Heart right ventricle (tissue), 16 donors: ENCODE measurements at regions of chr19 and their contacts with region 1.

Region 1: DNA sequence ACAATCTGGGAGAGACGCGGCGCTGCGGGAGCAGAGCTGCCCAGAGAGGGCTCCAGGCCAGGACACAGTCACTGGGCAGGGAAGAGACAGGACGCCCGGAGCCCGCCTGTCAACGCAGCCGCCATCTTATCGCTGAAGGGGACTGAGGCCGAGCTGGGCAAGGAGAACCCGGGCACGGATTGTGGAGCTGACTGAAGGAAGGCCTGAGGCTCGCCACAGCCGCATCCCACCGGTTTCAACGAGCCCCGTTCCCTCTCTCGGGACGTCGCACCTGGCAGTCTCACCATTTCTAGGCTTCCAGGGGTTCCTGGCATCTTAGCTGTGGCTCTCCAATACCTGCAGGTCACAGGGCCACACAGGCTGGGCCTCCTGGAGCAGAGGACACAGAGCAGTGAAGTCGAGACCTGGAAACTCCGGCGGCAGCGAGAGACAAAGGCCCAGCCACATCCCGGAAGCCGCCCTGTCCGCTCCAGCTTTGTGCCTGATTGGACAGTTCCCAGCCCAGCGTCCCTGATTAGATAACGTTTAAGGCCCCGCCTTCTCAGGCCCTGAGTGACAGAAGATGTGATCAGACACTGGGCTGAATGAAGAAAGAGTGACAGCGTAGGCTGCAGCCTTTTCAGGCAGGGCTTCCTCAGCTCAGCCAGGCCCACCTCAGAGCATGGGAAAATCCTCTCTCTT is at the start of gene ZNF91:
- DNase-seq: peak; percentile 91 to 98
- ATAC-seq: peak; percentile 96 to 99 (median 98)
- H3K4me3 ChIP-seq: peak within 1 kb of the TSS; percentile 67 to 94 (median 78)
- H3K27ac ChIP-seq: peak within 1 kb of the TSS; percentile 90 to 98 (median 95)
- H3K4me1 ChIP-seq: peaks cover 7 to 44% (median 37%) of the 10 kb centered on the region in 9 donors
- H3K27me3 ChIP-seq: no peaks in the 10 kb centered on the region
- CTCF ChIP-seq: no peak
- total RNA-seq, gene ZNF91: 101 to 326 (median 158) TPM

Region 2: DNA sequence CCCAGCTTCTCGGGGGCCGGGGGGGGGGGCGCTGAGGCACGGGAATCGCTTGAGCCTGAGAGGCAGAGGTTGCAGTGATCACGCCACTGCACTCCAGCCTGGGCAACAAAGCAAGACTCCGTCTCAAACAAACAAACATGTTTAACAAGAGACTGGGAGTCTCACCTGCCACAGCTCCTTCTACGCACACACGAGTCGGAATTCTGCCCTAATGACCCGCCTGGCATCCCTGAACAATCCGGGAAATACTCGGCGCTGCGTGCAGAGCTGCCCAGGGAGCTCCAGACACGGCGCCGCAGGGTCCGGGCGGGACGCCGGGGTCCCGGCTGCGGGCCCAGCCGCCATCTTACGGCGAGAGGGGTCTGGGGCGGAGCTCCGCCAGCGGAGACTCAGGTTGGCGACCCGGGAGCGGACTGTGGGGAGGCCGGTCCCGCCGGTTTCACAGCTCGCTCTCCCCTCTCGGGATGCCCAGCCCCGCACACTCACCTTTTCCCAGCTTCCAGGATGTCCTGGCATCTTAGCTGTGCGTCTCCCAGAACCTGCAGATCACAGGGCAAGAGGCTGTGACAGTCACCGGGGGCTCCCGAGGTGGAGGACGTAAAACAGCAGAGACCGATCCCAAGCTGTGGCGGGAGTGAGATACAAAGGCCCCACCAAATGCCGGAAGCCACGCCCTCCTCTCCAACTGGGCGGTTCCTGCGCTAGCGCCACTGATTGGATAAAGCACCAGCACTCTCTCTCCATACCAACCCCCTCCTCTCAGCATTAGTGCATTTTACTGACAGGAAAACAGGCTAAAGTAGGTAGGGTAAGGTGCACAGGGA is 121.4 kb before region 1 on chr19:
- intact Hi-C with region 1: loop called in 1 of 10 experiments (anchors 10 kb)
- DNase-seq: peak; percentile 91 to 92
- ATAC-seq: peak; percentile 99 to 100 (median 100)
- H3K4me3 ChIP-seq: peak overlapping the region; percentile 69 to 100 (median 95)
- H3K27ac ChIP-seq: peak overlapping the region in 9 of 10 donors; percentile 69 to 89 (median 84)
- H3K4me1 ChIP-seq: peaks cover 0 to 18% (median 11%) of the 10 kb centered on the region in 9 donors
- H3K27me3 ChIP-seq: no peaks in the 10 kb centered on the region
- CTCF ChIP-seq: peak in 3 of 9 donors; percentile 6 to 34 (median 19)

Region 3: DNA sequence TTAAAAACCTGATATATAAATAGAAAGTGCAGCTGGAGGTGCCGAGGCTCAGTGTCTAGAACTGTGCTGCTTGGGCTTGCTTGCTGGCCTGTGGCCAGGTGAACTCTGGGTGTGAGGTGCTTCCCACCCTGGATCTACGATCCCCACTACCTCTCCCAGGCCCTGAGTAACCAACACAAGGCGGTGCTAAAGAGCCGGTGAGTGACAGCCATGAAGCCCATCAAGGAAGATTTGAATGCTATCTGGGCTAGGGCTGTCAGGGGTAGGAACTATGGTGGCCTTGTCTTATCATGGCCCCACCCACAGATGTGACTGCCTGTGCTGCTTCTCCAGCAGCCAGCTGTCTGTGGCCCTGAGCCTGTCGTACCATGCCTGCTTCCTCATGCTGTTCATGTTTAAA is 25.6 kb after region 1 on chr19:
- intact Hi-C with region 1: no loop called
- DNase-seq: no peak
- ATAC-seq: no peak
- H3K4me3 ChIP-seq: no peak overlapping the region
- H3K27ac ChIP-seq: no peak overlapping the region
- H3K4me1 ChIP-seq: peaks cover 0 to 6% (median under 1%) of the 10 kb centered on the region in 9 donors
- H3K27me3 ChIP-seq: peaks cover 0 to 12% (median 0%) of the 10 kb centered on the region in 7 donors
- CTCF ChIP-seq: no peak

Region 4: GRCh38 chr19:23505766-23506165 is 110.6 kb after region 1 on chr19:
- intact Hi-C with region 1: no loop called
- DNase-seq: no peak
- ATAC-seq: no peak
- H3K4me3 ChIP-seq: no peak overlapping the region
- H3K27ac ChIP-seq: no peak overlapping the region
- H3K4me1 ChIP-seq: no peaks in the 10 kb centered on the region
- H3K27me3 ChIP-seq: no peaks in the 10 kb centered on the region
- CTCF ChIP-seq: no peak

Region 5: DNA sequence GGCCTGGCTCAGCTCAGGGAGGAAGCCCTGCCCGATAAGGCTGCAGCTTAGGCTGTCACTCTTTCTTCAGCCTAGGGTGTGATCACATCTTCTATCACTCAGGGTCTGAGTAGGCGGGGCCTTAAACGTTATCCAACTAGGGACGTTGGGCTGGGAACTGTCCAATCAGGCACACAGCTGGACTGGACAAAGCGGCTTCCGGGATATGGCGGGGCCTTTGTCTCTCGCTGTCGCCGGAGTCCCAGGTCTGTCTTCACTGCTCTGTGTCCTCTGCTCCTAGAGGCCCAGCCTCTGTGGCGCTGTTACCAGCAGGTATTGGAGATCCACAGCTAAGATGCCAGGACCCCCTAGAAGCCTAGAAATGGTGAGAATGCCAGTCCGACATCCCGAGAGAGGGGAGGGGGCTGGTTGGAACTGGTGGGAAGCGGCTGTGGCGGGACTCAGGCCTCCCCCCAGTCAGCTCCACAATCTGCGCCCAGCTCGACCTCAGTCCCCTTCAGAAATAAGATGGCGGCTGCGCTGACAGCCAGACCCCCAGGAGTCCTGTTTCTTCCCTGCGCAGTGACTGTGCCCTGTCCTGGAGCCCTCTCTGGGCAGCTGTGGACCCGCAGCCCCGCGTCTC is 691.9 kb after region 1 on chr19 and contains the start of gene ZNF254:
- intact Hi-C with region 1: loop called in 1 of 10 experiments (anchors 10 kb)
- DNase-seq: peak; percentile 85 to 96
- ATAC-seq: peak; percentile 98 to 100 (median 100)
- H3K4me3 ChIP-seq: peak within 1 kb of the TSS; percentile 55 to 92 (median 72)
- H3K27ac ChIP-seq: peak within 1 kb of the TSS; percentile 70 to 98 (median 91)
- H3K4me1 ChIP-seq: peaks cover 5 to 24% (median 16%) of the 10 kb centered on the region in 9 donors
- H3K27me3 ChIP-seq: no peaks in the 10 kb centered on the region
- CTCF ChIP-seq: no peak
- total RNA-seq, gene ZNF254: 7.2 to 14.5 (median 11.7) TPM